ENCODE measurements at regions of chr17 and their contacts with region 1.

Region 1: DNA sequence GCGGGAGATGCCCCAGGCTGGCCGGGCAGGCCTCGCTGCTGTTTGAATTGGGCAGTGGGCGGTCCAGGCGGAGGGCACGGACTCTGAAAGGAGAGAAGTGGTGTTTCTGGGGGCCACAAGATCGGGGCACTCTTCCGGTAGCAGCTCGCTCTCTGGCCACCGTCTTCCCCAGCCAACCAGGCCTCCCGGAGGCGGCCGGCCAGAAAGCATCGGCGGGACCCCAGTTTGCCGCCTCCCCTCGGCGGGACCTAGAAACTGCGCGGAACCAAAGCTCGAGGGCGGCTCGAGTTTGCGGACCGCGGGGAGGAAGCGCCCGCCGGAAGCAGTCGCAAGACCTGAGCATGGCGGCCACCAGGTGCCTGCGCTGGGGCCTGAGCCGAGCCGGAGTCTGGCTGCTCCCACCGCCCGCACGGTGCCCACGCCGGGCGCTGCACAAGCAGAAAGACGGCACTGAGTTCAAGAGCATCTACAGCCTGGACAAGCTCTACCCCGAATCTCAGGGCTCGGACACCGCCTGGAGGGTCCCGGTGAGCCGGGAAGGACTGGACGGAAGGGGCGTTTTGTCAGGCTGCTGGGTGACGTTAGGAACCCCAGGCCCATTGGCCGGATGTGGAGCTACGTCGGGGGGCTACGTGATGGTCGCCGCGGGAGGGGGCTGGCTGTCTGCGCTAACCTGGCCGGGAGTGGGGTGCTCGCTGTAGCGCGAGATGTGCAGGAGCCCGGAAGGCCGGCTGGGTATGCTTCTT is at the start of gene MRPL58:
- DNase-seq: peak; percentile 94
- H3K4me3 ChIP-seq: peak within 1 kb of the TSS; percentile 63
- H3K27ac ChIP-seq: peak within 1 kb of the TSS; percentile 66
- H3K4me1 ChIP-seq: peaks cover 18% of the 10 kb centered on the region
- H3K27me3 ChIP-seq: no peaks in the 10 kb centered on the region
- CTCF ChIP-seq: peak; percentile 57
- total RNA-seq, gene MRPL58: 59.9 and 61.4 TPM in 2 replicates

Region 2: GRCh38 chr17:74923533-74924249 is 88.8 kb before region 1 on chr17:
- CTCF ChIA-PET with region 1: no interaction called
- POLR2A ChIA-PET with region 1: no interaction called
- intact Hi-C with region 1: no loop called
- DNase-seq: peak; percentile 60
- H3K4me3 ChIP-seq: peak overlapping the region; percentile 31
- H3K27ac ChIP-seq: no peak overlapping the region
- H3K4me1 ChIP-seq: peaks cover 14% of the 10 kb centered on the region
- H3K27me3 ChIP-seq: peaks cover 62% of the 10 kb centered on the region
- CTCF ChIP-seq: peak; percentile 91

Region 3: GRCh38 chr17:74972107-74972972 is 40.2 kb before region 1 on chr17 and contains the start of gene HID1:
- CTCF ChIA-PET with region 1: no interaction called
- POLR2A ChIA-PET with region 1: interaction called, 13 read pairs
- intact Hi-C with region 1: no loop called
- DNase-seq: peak; percentile 71
- H3K4me3 ChIP-seq: peak within 1 kb of the TSS; percentile 56
- H3K27ac ChIP-seq: no peak within 1 kb of the TSS
- H3K4me1 ChIP-seq: no peaks in the 10 kb centered on the region
- H3K27me3 ChIP-seq: peaks cover 5% of the 10 kb centered on the region
- CTCF ChIP-seq: no peak
- total RNA-seq, gene HID1: 1.2 and 2.9 TPM in 2 replicates

Region 4: DNA sequence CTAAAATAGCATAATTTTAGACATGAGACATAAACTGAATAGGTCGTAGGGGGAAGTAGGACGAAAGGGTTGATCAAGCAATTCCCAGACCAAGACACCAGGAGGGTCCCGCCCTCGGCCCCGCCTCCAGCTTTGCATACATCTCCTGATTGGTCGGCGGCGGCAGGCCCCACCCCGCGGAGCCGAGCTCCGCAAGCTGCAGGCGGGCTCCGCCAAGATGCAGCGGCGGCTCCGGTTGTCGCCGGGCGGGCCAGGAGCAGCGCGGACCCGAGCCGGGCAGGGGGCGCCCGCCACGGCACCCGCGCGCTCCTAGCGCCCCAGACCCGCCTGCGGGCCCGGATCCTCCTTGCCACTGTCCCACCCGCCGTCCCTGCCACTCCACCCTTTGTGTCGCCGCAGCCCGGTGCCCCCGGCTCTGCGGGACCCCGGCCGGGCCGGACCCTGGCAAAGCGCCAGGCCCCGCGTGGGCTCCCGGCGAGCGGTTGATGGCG is 25.1 kb before region 1 on chr17 and contains the start of gene CDR2L:
- CTCF ChIA-PET with region 1: interaction called, 13 read pairs
- POLR2A ChIA-PET with region 1: no interaction called
- intact Hi-C with region 1: loop called (anchors 2 kb)
- DNase-seq: peak; percentile 95
- H3K4me3 ChIP-seq: peak within 1 kb of the TSS; percentile 84
- H3K27ac ChIP-seq: peak within 1 kb of the TSS; percentile 71
- H3K4me1 ChIP-seq: peaks cover 10% of the 10 kb centered on the region
- H3K27me3 ChIP-seq: no peaks in the 10 kb centered on the region
- CTCF ChIP-seq: no peak
- total RNA-seq, gene CDR2L: 5.8 and 7.6 TPM in 2 replicates

Region 5: DNA sequence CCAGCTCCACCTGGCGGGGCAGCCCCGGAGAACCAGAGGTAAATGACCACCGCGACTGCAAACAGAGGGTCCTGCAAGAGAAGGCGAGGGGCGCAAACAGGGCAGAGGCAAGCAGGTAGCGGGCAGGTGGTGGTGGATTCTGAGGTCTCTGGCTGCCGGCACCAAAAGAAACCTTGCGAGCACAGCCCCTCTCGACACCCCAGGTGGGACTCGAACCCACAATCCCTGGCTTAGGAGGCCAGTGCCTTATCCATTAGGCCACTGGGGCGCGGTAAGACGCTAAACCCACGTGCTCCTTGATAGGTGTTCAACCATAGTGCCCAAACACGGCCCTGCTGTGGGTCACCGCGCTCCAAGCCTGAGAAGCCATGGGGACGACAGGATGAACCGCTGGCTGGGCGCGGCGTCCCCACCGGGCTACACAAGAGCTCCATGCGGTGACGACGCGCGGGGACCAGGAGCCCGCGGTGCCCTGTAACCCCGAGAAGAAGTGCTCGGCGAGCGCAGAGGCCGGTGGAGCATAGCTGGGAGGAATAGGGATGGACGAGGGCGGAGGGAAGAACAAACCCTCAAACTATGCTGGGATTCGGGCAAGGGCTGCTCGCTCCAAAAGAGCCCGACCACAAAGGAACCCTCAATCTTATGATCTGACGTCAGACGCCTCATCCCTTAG is 21.9 kb after region 1 on chr17:
- CTCF ChIA-PET with region 1: interaction called, 3 read pairs
- POLR2A ChIA-PET with region 1: no interaction called
- intact Hi-C with region 1: loop called (anchors 2 kb)
- DNase-seq: peak; percentile 96
- H3K4me3 ChIP-seq: peak overlapping the region; percentile 85
- H3K27ac ChIP-seq: peak overlapping the region; percentile 98
- H3K4me1 ChIP-seq: peaks cover 18% of the 10 kb centered on the region
- H3K27me3 ChIP-seq: no peaks in the 10 kb centered on the region
- CTCF ChIP-seq: 0 out of 2 replicates have a peak, but pooled peaks have one; percentile 23